ENCODE measurements at regions of chr9 and their contacts with region 1.

Region 1: DNA sequence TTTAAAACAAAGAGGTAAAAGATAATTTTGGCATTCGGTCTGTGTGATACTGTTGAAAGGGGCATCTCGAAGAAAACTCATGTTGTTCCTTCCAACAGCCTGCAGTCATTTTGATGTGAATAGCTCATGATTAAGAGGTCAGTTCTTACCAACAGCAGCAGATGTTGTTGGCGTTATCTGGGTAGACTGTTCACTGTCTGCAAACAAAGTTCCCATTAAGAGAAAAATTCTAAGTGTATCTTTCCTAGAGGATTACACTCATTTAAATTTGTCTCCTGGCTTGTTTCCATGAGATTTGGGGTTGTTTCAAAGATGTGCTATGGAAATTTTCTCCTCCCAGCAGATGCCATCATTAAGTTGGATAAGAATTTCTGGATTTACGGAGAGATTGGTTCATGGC is 138.2 kb upstream of the RORB start:
- DNase-seq: no peak
- H3K4me3 ChIP-seq: no peak overlapping the region
- H3K27ac ChIP-seq: no peak overlapping the region
- H3K4me1 ChIP-seq: no peaks in the 10 kb centered on the region
- H3K27me3 ChIP-seq: no peaks in the 10 kb centered on the region
- CTCF ChIP-seq: no peak

Region 2: GRCh38 chr9:74218385-74219063 is 140.4 kb before region 1 on chr9:
- intact Hi-C with region 1: loop called (anchors 10 kb)
- DNase-seq: no peak
- H3K4me3 ChIP-seq: no peak overlapping the region
- H3K27ac ChIP-seq: no peak overlapping the region
- H3K4me1 ChIP-seq: no peaks in the 10 kb centered on the region
- H3K27me3 ChIP-seq: no peaks in the 10 kb centered on the region
- CTCF ChIP-seq: no peak

Region 3: DNA sequence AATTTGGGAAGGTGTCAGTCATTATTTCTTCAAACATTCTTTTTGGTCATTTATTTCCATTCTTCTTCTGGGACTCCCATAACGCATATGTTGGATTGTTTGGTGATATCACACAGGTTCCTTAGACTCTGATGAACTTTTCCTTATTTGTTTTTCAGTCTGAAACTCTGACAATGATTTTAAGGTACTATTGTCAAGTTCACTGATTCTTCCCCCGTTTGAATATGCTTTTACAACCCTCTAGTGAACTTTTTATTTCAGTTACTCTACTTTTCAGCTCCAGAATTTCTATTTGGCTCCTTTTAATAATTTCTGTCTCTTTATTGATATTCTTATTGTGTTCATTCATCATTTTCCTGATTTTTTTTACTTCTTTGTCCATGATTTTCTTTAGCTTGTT is 45.7 kb after region 1 on chr9:
- intact Hi-C with region 1: loop called (anchors 5 kb)
- DNase-seq: no peak
- H3K4me3 ChIP-seq: no peak overlapping the region
- H3K27ac ChIP-seq: no peak overlapping the region
- H3K4me1 ChIP-seq: no peaks in the 10 kb centered on the region
- H3K27me3 ChIP-seq: no peaks in the 10 kb centered on the region
- CTCF ChIP-seq: no peak

Region 4: GRCh38 chr9:74887041-74887980 is 528.4 kb after region 1 on chr9 and contains the start of gene TRPM6:
- intact Hi-C with region 1: no loop called
- DNase-seq: peak in 1 of 2 donors; percentile 85
- H3K4me3 ChIP-seq: peak within 1 kb of the TSS; percentile 62 to 65
- H3K27ac ChIP-seq: peak within 1 kb of the TSS in 1 of 2 donors; percentile 70
- H3K4me1 ChIP-seq: peaks cover 0 to 5% of the 10 kb centered on the region in 2 donors
- H3K27me3 ChIP-seq: no peaks in the 10 kb centered on the region
- CTCF ChIP-seq: no peak
- total RNA-seq, gene TRPM6: 0.96 TPM

Region 5: DNA sequence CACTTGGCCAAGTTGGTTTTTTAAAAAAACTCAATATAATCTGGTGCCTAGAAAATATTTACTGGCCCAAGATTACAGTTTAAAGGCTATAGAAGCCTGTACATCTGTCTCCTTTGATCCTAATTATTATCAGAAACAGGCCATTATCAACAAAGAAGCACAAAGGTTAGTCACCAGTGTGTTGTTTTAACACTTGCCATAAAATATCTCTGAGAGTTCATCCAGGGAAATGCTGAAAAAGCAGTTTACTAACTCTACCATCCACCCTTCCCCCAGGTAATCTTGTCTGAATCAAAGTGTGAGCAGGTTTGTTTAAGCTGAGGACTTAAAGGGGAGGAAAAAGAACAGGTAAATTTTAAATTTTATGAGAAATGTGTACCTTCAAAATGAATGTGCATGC is 542.0 kb after region 1 on chr9:
- intact Hi-C with region 1: no loop called
- DNase-seq: no peak
- H3K4me3 ChIP-seq: no peak overlapping the region
- H3K27ac ChIP-seq: no peak overlapping the region
- H3K4me1 ChIP-seq: no peaks in the 10 kb centered on the region
- H3K27me3 ChIP-seq: no peaks in the 10 kb centered on the region
- CTCF ChIP-seq: no peak